A673 (cell line): ENCODE measurements at regions of chr12 and their contacts with region 1.

Region 1: GRCh38 chr12:5745265-5745888 is 199.7 kb downstream of the ANO2 start:
- DNase-seq: peak; percentile 70
- H3K4me3 ChIP-seq: no peak overlapping the region
- H3K27ac ChIP-seq: no peak overlapping the region
- H3K4me1 ChIP-seq: no peaks in the 10 kb centered on the region
- H3K27me3 ChIP-seq: no peaks in the 10 kb centered on the region
- CTCF ChIP-seq: peak; percentile 86

Region 2: DNA sequence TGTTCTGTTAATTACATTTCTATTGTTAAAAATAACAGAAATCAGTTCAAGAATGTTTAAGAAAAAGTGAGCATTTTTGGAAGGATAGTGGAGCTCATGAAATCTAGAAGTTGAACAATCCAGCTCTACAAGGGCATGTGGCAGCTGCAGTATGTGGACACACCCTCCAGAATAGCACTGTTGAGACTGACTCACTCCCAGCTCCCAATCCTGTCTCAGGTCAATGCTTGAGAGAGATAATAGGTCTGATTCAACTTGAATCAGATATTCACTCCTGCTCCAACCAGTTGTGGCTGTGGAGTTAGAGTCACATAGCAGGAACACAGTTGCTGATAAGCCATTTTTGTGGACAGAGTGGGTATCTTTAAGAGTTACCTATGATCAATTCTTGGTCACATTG is 426.5 kb before region 1 on chr12:
- CTCF ChIA-PET with region 1: no interaction called
- POLR2A ChIA-PET with region 1: no interaction called
- intact Hi-C with region 1: no loop called
- DNase-seq: no peak
- H3K4me3 ChIP-seq: no peak overlapping the region
- H3K27ac ChIP-seq: no peak overlapping the region
- H3K4me1 ChIP-seq: no peaks in the 10 kb centered on the region
- H3K27me3 ChIP-seq: no peaks in the 10 kb centered on the region
- CTCF ChIP-seq: no peak

Region 3: DNA sequence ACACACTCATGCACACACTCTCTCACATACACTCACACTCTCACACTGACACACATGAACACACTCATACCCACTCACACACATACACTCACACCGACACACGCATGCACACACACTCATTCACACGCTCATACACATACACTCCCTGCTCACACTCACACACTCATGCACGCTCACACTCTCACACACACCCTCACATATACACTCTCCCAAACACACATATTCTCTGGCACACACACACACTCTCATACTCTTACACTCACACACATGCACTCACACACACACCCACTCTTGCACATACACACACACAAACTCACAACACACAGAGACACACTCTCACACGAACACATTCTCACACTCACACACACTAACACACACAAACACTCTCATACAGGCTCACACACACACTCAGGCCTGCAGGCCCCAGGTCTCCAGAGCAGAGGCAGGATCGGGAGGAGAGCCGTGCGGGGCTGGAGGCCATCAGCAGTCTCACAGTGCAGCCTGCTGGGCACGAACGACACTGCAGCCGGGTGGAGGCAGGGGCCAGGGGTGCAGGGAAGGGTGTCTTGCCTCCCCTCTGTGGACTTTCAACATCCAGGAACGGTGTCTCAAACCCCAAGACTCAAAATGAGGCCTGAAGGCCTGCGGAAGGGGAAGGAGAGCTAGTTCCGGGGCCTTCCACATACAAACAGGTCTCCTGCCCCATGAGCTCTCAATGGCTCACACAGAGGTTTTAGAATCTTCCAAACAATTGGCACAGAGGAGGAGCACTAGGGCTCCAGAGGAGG is 51.0 kb after region 1 on chr12:
- CTCF ChIA-PET with region 1: interaction called, 4 read pairs
- POLR2A ChIA-PET with region 1: no interaction called
- intact Hi-C with region 1: loop called (anchors 5 kb)
- DNase-seq: peak; percentile 47
- H3K4me3 ChIP-seq: no peak overlapping the region
- H3K27ac ChIP-seq: no peak overlapping the region
- H3K4me1 ChIP-seq: no peaks in the 10 kb centered on the region
- H3K27me3 ChIP-seq: peaks cover 7% of the 10 kb centered on the region
- CTCF ChIP-seq: peak; percentile 66